Activated CD4-positive, alpha-beta T cell treated with anti-CD3 and anti-CD28 coated beads, Interleukin-2, amount 10 ng/mL, durations not matched to agents 24 days and 14 days (primary cell): ENCODE measurements at regions of chr19 and their contacts with region 1.

Region 1: GRCh38 chr19:49497047-49497788 is 984 bp downstream of the RPS11 start:
- DNase-seq: peak; percentile 93
- H3K4me3 Mint-ChIP-seq: peak overlapping the region; percentile 98
- H3K27ac Mint-ChIP-seq: peak overlapping the region; percentile 99
- H3K4me1 Mint-ChIP-seq: peaks cover 57% of the 10 kb centered on the region
- H3K27me3 Mint-ChIP-seq: no peaks in the 10 kb centered on the region

Region 2: DNA sequence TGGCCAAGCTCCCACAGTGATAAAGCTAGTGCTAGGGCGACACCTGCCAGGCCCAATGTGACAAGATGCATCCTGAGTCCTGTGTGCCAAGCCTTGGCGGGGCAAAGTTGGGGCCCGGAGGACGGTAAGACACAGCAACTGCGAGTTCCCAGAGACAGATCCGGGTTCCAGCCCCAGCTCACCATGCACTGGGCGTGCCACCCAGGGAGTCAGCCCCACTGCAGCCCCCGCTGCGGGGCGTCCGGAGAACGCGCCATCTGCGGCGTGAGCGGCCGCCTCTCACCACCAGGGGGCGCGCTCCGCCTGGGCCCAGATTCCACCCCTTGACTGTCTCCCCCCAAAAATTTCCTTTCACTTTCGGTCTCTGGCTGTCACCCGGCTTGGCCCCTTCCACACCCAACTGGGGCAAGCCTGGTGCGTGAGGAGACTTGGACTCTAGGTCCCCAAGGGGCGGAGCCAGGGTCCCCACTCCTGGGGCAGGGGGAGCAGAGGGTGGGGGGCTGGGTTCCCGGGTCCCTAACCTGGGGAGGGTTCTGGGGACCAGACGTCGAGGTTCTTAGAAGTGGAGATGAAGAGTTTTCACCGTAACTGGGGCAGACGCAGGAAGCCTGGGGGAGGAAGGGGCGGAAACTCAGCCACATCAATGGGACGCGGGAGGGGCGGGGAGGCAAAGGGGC is 23.2 kb before region 1 on chr19 and contains the start of gene FLT3LG:
- intact Hi-C with region 1: loop called (anchors 1 kb)
- DNase-seq: peak; percentile 99
- H3K4me3 Mint-ChIP-seq: peak within 1 kb of the TSS; percentile 97
- H3K27ac Mint-ChIP-seq: peak within 1 kb of the TSS; percentile 90
- H3K4me1 Mint-ChIP-seq: peaks cover 54% of the 10 kb centered on the region
- H3K27me3 Mint-ChIP-seq: no peaks in the 10 kb centered on the region
- total RNA-seq, gene FLT3LG: 51.8 and 57.6 TPM in 2 replicates